Endothelial cell of umbilical vein (primary cell): ENCODE measurements at regions of chr17 and their contacts with region 1.

Region 1: DNA sequence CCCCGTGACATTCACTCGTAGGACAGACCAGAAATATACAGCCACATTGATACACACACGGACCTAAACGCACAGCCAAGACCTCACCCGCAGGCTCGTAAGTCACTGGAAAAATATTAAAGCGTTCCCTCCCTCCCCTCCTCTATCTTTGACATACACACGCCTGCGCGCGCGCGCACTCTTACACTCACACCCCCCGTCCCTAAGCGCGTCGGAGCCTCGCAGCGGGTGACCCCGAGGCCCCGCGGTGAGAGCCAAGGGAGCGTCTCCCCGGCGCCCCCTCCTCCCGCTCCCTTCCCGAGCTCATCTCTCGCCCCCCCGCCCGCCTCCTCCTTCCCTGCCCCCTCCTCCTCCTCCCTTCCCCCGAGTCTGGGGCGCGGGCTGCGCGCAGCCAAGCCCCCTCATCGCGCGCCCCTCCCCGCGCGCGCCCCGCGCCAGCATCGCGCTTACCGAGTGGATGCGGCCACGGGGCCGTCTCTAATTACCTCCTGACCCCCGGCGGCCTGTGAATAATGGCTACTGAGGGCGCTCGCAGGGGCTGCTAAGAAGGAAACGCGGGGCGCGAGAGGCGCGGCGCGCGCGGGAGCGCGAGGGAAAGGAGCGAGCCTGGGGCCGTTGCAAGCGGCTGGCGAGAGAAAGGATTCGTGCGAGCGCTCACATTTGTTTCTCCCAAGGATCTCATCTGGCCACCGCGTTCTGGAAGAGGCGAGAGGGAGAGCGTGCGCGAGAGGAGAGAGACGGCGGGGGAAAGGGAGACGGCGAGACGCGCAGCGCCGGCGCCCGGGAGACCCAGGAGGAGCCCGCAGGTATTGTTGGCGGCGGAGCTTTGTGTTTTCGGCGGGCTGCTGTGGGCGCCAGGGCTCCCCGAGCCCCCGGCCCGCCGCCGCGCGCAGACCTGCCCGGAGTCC is 42.4 kb downstream of the RAI1 start:
- DNase-seq: peak; percentile 61
- H3K4me3 ChIP-seq: peak overlapping the region; percentile 41 to 57 (median 50)
- H3K27ac ChIP-seq: peak overlapping the region; percentile 79
- H3K4me1 ChIP-seq: peaks cover 34% of the 10 kb centered on the region
- H3K27me3 ChIP-seq: no peaks in the 10 kb centered on the region
- CTCF ChIP-seq: no peak
- POLR2A ChIP-seq: peak; percentile 12

Region 2: GRCh38 chr17:17694169-17695081 is 29.2 kb before region 1 on chr17:
- CTCF ChIA-PET with region 1: no interaction called
- POLR2A ChIA-PET with region 1: interaction called, 3 read pairs
- dilution Hi-C with region 1: no loop called
- intact Hi-C with region 1: loop called (anchors 1 kb)
- DNase-seq: peak; percentile 83
- H3K4me3 ChIP-seq: peak overlapping the region; percentile 40 to 55 (median 48)
- H3K27ac ChIP-seq: peak overlapping the region; percentile 88
- H3K4me1 ChIP-seq: peaks cover 42% of the 10 kb centered on the region
- H3K27me3 ChIP-seq: no peaks in the 10 kb centered on the region
- CTCF ChIP-seq: no peak
- POLR2A ChIP-seq: peak; percentile 62

Region 3: GRCh38 chr17:17712268-17712924 is 11.2 kb before region 1 on chr17:
- CTCF ChIA-PET with region 1: no interaction called
- POLR2A ChIA-PET with region 1: no interaction called
- dilution Hi-C with region 1: no loop called
- intact Hi-C with region 1: loop called (anchors 1 kb)
- DNase-seq: peak; percentile 94
- H3K4me3 ChIP-seq: no peak overlapping the region
- H3K27ac ChIP-seq: peak overlapping the region; percentile 98
- H3K4me1 ChIP-seq: peaks cover 33% of the 10 kb centered on the region
- H3K27me3 ChIP-seq: no peaks in the 10 kb centered on the region
- CTCF ChIP-seq: no peak
- POLR2A ChIP-seq: no peak